Cardiac septum (tissue), 1 donor: ENCODE measurements at regions of chr20 and their contacts with region 1.

Region 1: GRCh38 chr20:59102841-59103299 is 60.3 kb upstream of the PRELID3B start:
- DNase-seq: no peak

Region 2: DNA sequence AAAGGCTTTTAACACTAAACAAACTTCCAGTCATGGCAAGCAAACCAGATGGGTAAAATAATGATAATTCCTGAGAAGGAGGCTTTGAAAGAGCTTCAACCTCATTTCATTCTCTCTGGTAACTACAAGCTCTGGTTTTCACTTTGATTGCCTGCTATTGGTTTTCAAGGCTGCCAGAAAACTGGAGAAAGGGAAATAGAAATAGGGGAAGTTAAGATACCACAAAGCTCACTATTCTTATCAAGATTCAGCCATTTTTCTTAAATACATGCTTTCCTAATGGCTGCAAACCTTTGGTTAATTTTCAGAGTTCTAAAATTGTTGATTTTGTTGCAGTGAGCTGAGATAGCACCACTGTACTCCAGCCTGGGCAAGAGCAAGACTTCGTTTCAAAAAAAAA is 164.3 kb before region 1 on chr20:
- intact Hi-C with region 1: no loop called
- DNase-seq: no peak

Region 3: DNA sequence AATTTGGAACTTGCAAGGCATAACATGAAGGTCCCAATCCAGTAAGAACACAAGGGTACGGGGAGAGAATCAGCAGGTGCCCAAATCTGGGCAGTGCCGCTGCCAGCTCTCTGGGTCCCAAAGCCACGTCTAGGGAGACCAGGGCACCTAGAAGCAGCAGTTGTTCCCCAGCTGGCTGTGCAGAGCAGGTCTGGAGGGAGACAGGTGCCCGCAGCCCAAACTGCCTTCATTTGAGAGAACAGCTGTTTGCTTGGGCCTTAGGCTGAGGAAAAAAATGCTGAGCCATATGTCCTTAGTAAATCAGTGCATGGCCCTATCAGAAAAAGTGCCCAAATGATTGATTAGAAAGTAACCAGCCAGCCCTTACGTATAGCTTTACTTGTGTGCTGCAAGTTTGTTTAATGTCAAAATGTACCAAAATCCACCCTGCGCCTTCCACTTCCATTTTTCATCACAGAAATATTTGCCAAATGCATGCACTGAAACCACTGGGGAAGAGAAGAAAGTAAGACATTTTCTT is 51.1 kb before region 1 on chr20:
- intact Hi-C with region 1: loop called (anchors 5 kb)
- DNase-seq: no peak

Region 4: GRCh38 chr20:59159493-59160376 is 56.9 kb after region 1 on chr20:
- intact Hi-C with region 1: no loop called
- DNase-seq: no peak